CD8-positive, alpha-beta memory T cell (primary cell): ENCODE measurements at regions of chr19 and their contacts with region 1.

Region 1: DNA sequence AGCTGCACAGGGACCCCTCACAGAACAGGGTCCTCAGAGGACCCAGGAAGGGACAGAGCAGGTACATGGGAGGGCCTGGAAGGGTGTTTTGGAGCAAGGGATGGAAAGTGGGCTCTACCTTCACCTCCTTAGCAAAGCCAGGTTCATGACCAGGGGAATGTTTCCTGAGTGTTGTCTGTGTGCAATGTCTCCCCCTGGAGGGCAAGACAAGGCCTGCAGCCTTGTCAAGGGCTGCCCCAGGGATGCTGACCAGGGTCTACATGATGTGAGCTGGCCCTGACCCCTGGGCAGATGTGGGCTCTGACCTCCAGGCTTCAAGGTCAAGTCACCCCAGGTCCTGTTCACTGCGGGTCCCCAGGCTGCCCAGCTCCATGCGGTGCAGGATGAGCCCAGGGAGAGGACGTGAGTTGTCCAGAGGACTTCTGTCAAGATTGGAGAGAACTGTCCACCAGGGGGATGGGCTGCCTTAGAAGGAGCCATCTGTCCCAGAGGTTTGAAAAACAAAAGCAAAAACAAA is 1.0 kb upstream of the CEACAM1 start:
- DNase-seq: peak; percentile 40 to 71 (median 59)
- H3K4me3 ChIP-seq: peak overlapping the region; percentile 46
- H3K4me3 Mint-ChIP-seq: peak overlapping the region; percentile 27 to 86 (median 73)
- H3K27ac ChIP-seq: no peak overlapping the region
- H3K27ac Mint-ChIP-seq: peak overlapping the region in 7 of 8 donors; percentile 14 to 96 (median 77)
- H3K4me1 ChIP-seq: peaks cover 25% of the 10 kb centered on the region
- H3K4me1 Mint-ChIP-seq: peaks cover 20 to 28% (median 27%) of the 10 kb centered on the region in 3 donors
- H3K27me3 ChIP-seq: no peaks in the 10 kb centered on the region
- H3K27me3 Mint-ChIP-seq: peaks cover 0 to 1% of the 10 kb centered on the region in 2 donors

Region 2: DNA sequence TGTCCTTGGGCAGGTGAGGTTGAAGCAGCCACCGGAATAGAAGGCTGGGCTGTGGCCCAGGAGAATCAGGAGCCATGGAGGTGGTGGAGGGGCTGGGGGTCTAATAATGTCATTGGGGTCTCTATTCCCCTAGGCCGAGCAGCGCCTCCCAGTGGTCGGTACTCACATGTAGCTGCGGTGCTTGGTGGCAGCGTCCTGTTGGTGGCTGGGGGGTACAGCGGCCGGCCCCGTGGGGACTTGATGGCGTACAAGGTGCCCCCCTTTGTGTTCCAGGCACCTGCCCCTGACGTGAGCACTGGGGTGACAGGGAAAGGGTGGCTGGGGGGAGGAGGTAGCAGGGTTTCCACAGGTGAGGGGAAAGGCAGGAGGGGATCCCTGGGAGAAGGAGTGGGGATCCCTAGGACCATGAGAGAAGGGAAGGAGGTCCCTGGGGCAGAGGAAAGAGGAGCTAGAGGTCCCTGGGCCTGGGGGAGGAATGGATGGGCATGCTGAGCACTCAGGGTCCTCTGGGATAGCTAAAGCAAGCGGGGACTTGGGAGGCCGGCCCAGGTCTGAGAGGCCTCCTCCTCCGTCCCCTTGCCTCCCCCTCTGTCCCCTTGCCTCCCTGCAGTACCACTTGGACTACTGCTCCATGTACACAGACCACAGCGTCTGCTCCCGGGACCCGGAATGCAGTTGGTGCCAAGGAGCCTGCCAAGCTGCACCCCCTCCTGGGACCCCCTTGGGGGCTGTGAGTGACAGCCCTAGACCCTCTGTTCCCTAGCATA is 185.8 kb before region 1 on chr19:
- CTCF ChIA-PET with region 1: no interaction called
- POLR2A ChIA-PET with region 1: no interaction called
- DNase-seq: no peak
- H3K4me3 ChIP-seq: no peak overlapping the region
- H3K4me3 Mint-ChIP-seq: no peak overlapping the region
- H3K27ac ChIP-seq: no peak overlapping the region
- H3K27ac Mint-ChIP-seq: peak overlapping the region in 1 of 8 donors; percentile 83
- H3K4me1 ChIP-seq: no peaks in the 10 kb centered on the region
- H3K4me1 Mint-ChIP-seq: no peaks in the 10 kb centered on the region
- H3K27me3 ChIP-seq: no peaks in the 10 kb centered on the region
- H3K27me3 Mint-ChIP-seq: no peaks in the 10 kb centered on the region

Region 3: GRCh38 chr19:42450314-42450934 is 78.9 kb before region 1 on chr19:
- CTCF ChIA-PET with region 1: interaction called, 62 read pairs
- POLR2A ChIA-PET with region 1: no interaction called
- DNase-seq: peak; percentile 61 to 88 (median 82)
- H3K4me3 ChIP-seq: no peak overlapping the region
- H3K4me3 Mint-ChIP-seq: no peak overlapping the region
- H3K27ac ChIP-seq: peak overlapping the region; percentile 32
- H3K27ac Mint-ChIP-seq: no peak overlapping the region
- H3K4me1 ChIP-seq: peaks cover 16% of the 10 kb centered on the region
- H3K4me1 Mint-ChIP-seq: no peaks in the 10 kb centered on the region
- H3K27me3 ChIP-seq: no peaks in the 10 kb centered on the region
- H3K27me3 Mint-ChIP-seq: peaks cover 2 to 3% of the 10 kb centered on the region in 2 donors